Aorta (tissue), 5 donors: ENCODE measurements at regions of chr3 and their contacts with region 1.

Region 1: GRCh38 chr3:32510075-32510724 is 7.5 kb upstream of the CMTM6 start:
- DNase-seq: peak in 1 of 2 donors; percentile 69
- ATAC-seq: peak; percentile 87
- H3K4me3 ChIP-seq: no peak overlapping the region
- H3K27ac ChIP-seq: no peak overlapping the region
- H3K4me1 ChIP-seq: no peaks in the 10 kb centered on the region
- H3K27me3 ChIP-seq: no peaks in the 10 kb centered on the region

Region 2: DNA sequence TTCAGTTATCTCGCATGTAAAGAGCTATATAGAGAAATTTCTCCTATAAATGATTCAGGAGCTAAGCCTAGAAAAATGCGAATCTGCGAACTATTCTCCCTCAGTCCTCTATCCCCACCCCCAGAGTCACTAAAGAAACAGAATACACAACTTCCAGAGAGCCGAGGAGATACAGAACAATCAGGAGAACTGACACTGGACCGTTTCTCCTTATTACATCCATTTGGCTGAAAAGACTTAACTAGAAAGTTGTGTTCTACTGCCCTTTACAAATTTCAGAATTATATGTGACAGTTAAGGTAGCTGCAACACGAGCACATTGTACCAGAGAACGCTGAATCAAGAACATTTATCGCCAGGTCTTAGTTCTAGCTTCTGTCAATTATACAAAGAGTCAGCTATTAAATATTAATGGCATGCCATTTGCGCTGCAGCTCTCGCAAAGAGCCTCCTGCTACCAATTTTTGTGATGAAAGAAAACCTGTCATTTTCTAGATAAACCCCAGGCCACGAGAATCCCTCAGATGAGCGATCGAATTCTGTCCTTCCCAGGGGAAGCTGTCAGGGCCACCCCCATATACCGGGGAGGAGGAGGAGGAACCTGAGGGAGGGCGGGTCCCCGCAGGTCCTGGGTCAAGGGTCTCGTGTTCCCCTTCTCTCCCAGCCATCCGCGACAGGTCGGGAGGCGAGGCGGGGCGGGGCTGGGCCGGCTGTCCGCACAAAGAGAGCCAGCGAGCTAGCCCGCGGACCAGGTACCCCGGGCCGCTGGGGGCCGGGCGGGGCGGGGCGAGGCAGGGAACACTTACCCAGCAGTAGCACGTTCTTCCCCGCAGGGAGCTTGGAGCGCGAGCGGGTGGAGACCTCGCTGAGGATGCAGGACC is 59.6 kb after region 1 on chr3:
- intact Hi-C with region 1: loop called in 1 of 2 experiments (anchors 2 kb)
- DNase-seq: peak; percentile 69 to 86
- ATAC-seq: peak; percentile 55
- H3K4me3 ChIP-seq: peak overlapping the region; percentile 70 to 94
- H3K27ac ChIP-seq: peak overlapping the region; percentile 30 to 71
- H3K4me1 ChIP-seq: peaks cover 0 to under 1% of the 10 kb centered on the region in 2 donors
- H3K27me3 ChIP-seq: no peaks in the 10 kb centered on the region

Region 3: DNA sequence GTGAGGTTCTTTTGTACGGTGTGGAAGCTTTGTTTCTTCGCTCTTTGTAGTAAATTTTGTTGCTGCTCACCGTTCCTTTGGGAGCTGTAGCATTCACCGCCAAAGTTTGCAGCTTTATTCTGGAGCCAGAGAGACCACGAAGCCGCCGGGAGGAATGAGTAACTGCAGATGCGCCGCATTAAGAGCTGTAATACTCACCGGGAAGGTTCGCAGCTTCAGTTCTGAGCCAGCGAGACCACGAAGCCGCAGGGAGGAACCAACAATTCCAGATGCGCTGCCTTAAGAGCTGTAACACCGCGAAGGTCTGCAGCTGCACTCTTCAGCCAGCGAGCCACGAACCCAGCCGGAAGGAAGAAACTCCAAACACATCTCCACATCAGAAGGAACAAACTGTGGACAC is 116.4 kb after region 1 on chr3:
- intact Hi-C with region 1: no loop called
- DNase-seq: no peak
- ATAC-seq: no peak
- H3K4me3 ChIP-seq: no peak overlapping the region
- H3K27ac ChIP-seq: no peak overlapping the region
- H3K4me1 ChIP-seq: no peaks in the 10 kb centered on the region
- H3K27me3 ChIP-seq: no peaks in the 10 kb centered on the region

Region 4: GRCh38 chr3:32667122-32667521 is 156.9 kb after region 1 on chr3:
- intact Hi-C with region 1: loop called (anchors 1 to 2 kb)
- DNase-seq: no peak
- ATAC-seq: no peak
- H3K4me3 ChIP-seq: no peak overlapping the region
- H3K27ac ChIP-seq: no peak overlapping the region
- H3K4me1 ChIP-seq: no peaks in the 10 kb centered on the region
- H3K27me3 ChIP-seq: no peaks in the 10 kb centered on the region